ENCODE measurements at regions of chr7 and their contacts with region 1.

Region 1: GRCh38 chr7:84188786-84189405 is 5.7 kb downstream of the SEMA3A start:
- DNase-seq: no peak
- ATAC-seq: no peak

Region 2: GRCh38 chr7:83976295-83976694 is 212.6 kb before region 1 on chr7:
- intact Hi-C with region 1: loop called (anchors 2 kb)
- DNase-seq: no peak
- ATAC-seq: no peak

Region 3: GRCh38 chr7:84271543-84271942 is 82.6 kb after region 1 on chr7:
- intact Hi-C with region 1: no loop called
- DNase-seq: no peak
- ATAC-seq: no peak

Measured in Right ventricle myocardium inferior (tissue), 1 donor.